ENCODE measurements at regions of chr12 and their contacts with region 1.

Region 1: DNA sequence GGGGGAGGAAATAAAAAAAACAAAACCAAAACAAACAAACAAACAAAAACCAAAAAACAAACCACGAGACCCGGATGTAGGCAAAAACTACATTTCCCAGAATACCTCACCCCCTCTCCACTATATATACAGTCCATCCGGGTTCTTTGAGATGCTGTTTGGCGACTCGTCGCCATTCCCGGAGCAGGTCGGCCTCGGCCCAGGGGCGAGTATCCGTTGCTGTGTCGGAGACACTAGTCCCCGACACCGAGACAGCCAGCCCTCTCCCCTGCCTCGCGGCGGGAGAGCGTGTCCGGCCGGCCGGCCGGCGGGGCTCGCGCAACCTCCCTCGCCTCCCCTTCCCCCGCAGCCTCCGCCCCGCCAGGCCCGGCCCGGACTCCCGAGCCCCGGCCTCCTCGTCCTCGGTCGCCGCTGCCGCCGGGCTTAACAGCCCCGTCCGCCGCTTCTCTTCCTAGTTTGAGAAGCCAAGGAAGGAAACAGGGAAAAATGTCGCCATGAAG is at the start of gene RNF10:
- DNase-seq: peak; percentile 61 to 88 (median 85)
- ATAC-seq: peak; percentile 84
- H3K4me3 ChIP-seq: peak within 1 kb of the TSS; percentile 92
- H3K4me3 Mint-ChIP-seq: peak within 1 kb of the TSS; percentile 87 to 98 (median 96)
- H3K27ac ChIP-seq: peak within 1 kb of the TSS; percentile 97
- H3K27ac Mint-ChIP-seq: peak within 1 kb of the TSS; percentile 90 to 95 (median 95)
- H3K4me1 ChIP-seq: peaks cover 34 to 40% of the 10 kb centered on the region in 2 donors
- H3K4me1 Mint-ChIP-seq: peaks cover 28 to 57% (median 54%) of the 10 kb centered on the region in 7 donors
- H3K27me3 ChIP-seq: no peaks in the 10 kb centered on the region
- H3K27me3 Mint-ChIP-seq: peaks cover 0 to 2% (median 0%) of the 10 kb centered on the region in 5 donors
- total RNA-seq, gene RNF10: 171 to 361 (median 205) TPM

Region 2: GRCh38 chr12:119667577-119668323 is 866.5 kb before region 1 on chr12 and contains the start of gene PRKAB1:
- CTCF ChIA-PET with region 1: no interaction called
- POLR2A ChIA-PET with region 1: no interaction called
- intact Hi-C with region 1: loop called in 1 of 2 experiments (anchors 10 kb)
- DNase-seq: peak; percentile 91 to 96 (median 93)
- ATAC-seq: peak; percentile 96
- H3K4me3 ChIP-seq: peak within 1 kb of the TSS; percentile 81
- H3K4me3 Mint-ChIP-seq: peak within 1 kb of the TSS; percentile 85 to 98 (median 88)
- H3K27ac ChIP-seq: peak within 1 kb of the TSS; percentile 76
- H3K27ac Mint-ChIP-seq: peak within 1 kb of the TSS; percentile 77 to 96 (median 92)
- H3K4me1 ChIP-seq: peaks cover 20 to 30% of the 10 kb centered on the region in 2 donors
- H3K4me1 Mint-ChIP-seq: peaks cover 27 to 63% (median 55%) of the 10 kb centered on the region in 7 donors
- H3K27me3 ChIP-seq: no peaks in the 10 kb centered on the region
- H3K27me3 Mint-ChIP-seq: no peaks in the 10 kb centered on the region
- total RNA-seq, gene PRKAB1: 23.5 to 48.7 (median 43.3) TPM

Region 3: DNA sequence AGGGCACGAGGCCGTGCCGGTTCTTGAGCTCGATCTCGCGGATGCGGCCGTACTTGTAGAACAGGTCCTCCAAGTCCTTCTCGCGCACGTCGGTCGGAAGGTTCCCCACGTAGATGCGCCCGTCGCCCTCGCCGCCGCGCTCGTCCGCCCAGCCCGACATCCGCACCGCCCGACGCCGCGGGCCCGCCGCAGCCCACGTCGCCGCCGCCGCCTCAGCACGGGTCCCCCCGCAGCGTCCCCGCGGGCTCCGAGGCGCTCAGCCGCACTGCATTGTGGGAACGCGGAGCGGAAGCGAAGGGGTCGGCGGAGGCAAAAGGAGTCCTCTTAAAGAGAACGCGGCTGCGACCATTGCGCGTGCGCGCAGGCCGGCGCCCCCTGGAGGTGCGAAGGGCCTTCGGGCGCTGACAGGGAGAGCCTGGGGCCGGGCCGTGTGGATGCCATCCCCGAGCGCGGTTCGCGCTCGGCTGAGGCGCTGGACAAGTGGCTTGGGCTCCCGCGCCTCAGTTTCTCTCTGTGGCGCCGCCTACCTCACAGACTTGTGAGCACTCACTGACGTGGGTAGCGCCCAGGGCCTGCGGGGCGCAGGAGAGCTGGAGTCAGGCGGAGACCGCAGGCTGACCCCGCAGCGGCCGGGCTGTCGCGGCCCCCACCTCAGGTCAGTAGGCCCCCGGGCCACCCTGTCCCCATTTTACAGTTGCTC is 64.7 kb before region 1 on chr12 and contains the start of gene SRSF9:
- CTCF ChIA-PET with region 1: interaction called, 4 read pairs
- POLR2A ChIA-PET with region 1: interaction called, 9 read pairs
- intact Hi-C with region 1: loop called (anchors 1 kb)
- DNase-seq: peak; percentile 96 to 100 (median 97)
- ATAC-seq: peak; percentile 95
- H3K4me3 ChIP-seq: peak within 1 kb of the TSS; percentile 78
- H3K4me3 Mint-ChIP-seq: peak within 1 kb of the TSS; percentile 75 to 99 (median 90)
- H3K27ac ChIP-seq: peak within 1 kb of the TSS; percentile 86
- H3K27ac Mint-ChIP-seq: peak within 1 kb of the TSS; percentile 71 to 96 (median 86)
- H3K4me1 ChIP-seq: peaks cover 4 to 31% of the 10 kb centered on the region in 2 donors
- H3K4me1 Mint-ChIP-seq: peaks cover 34 to 65% (median 47%) of the 10 kb centered on the region in 7 donors
- H3K27me3 ChIP-seq: no peaks in the 10 kb centered on the region
- H3K27me3 Mint-ChIP-seq: peaks cover 0 to 2% (median 0%) of the 10 kb centered on the region in 5 donors
- total RNA-seq, gene SRSF9: 136 to 191 (median 145) TPM

Region 4: DNA sequence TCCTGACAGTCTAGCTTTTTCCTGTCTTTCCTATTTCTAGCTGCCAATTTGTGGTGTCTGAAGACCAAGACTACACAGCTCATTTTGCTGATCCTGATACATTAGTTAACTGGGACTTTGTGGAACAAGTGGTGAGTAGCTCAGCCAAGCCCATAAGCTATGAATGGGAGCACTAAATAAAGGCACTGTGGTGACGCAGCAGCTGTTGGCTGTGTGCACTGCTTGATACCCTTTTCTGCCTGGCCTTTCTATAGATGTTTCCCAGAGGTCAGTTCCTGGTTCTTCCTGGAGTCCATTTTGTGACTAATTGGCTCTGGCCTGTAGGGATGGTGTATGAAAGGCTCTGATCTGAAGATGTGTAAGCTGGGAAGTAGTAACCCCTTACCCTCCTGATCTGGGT is 20.4 kb after region 1 on chr12:
- CTCF ChIA-PET with region 1: interaction called, 3 read pairs
- POLR2A ChIA-PET with region 1: interaction called, 6 read pairs
- intact Hi-C with region 1: loop called in 1 of 2 experiments (anchors 2 kb)
- DNase-seq: no peak
- ATAC-seq: no peak
- H3K4me3 ChIP-seq: no peak overlapping the region
- H3K4me3 Mint-ChIP-seq: no peak overlapping the region
- H3K27ac ChIP-seq: no peak overlapping the region
- H3K27ac Mint-ChIP-seq: peak overlapping the region in 1 of 9 donors; percentile 43
- H3K4me1 ChIP-seq: no peaks in the 10 kb centered on the region
- H3K4me1 Mint-ChIP-seq: peaks cover 6 to 24% (median 11%) of the 10 kb centered on the region in 7 donors
- H3K27me3 ChIP-seq: no peaks in the 10 kb centered on the region
- H3K27me3 Mint-ChIP-seq: no peaks in the 10 kb centered on the region

Region 5: GRCh38 chr12:121015825-121016766 is 481.8 kb after region 1 on chr12 and contains the start of gene C12orf43:
- CTCF ChIA-PET with region 1: no interaction called
- POLR2A ChIA-PET with region 1: no interaction called
- intact Hi-C with region 1: loop called in 1 of 2 experiments (anchors 5 kb)
- DNase-seq: peak; percentile 74 to 93 (median 89)
- ATAC-seq: peak; percentile 99
- H3K4me3 ChIP-seq: peak within 1 kb of the TSS; percentile 88
- H3K4me3 Mint-ChIP-seq: peak within 1 kb of the TSS; percentile 93 to 99 (median 96)
- H3K27ac ChIP-seq: peak within 1 kb of the TSS; percentile 88
- H3K27ac Mint-ChIP-seq: peak within 1 kb of the TSS; percentile 89 to 97 (median 95)
- H3K4me1 ChIP-seq: peaks cover 6 to 11% of the 10 kb centered on the region in 2 donors
- H3K4me1 Mint-ChIP-seq: peaks cover 17 to 32% (median 24%) of the 10 kb centered on the region in 7 donors
- H3K27me3 ChIP-seq: no peaks in the 10 kb centered on the region
- H3K27me3 Mint-ChIP-seq: no peaks in the 10 kb centered on the region
- total RNA-seq, gene C12orf43: 11.8 to 24.2 (median 17.5) TPM

Measured in naive thymus-derived CD4-positive, alpha-beta T cell (primary cell).